ENCODE measurements at regions of chr6 and their contacts with region 1.

Region 1: GRCh38 chr6:33620856-33621710 is at the start of gene ITPR3:
- DNase-seq: peak; percentile 93
- H3K4me3 ChIP-seq: peak within 1 kb of the TSS; percentile 98
- H3K27ac ChIP-seq: peak within 1 kb of the TSS; percentile 75
- H3K4me1 ChIP-seq: peaks cover 56% of the 10 kb centered on the region
- CTCF ChIP-seq: no peak; the same call in 1 of the 2 replicates
- total RNA-seq, gene ITPR3: 47.8 and 56.6 TPM in 2 replicates

Region 2: GRCh38 chr6:33597551-33598322 is 23.3 kb before region 1 on chr6:
- CTCF ChIA-PET with region 1: no interaction called
- POLR2A ChIA-PET with region 1: interaction called, 5 read pairs
- intact Hi-C with region 1: loop called (anchors 1 kb)
- DNase-seq: no peak
- H3K4me3 ChIP-seq: no peak overlapping the region
- H3K27ac ChIP-seq: peak overlapping the region; percentile 52
- H3K4me1 ChIP-seq: peaks cover 56% of the 10 kb centered on the region
- CTCF ChIP-seq: no peak

Region 3: GRCh38 chr6:34067814-34068213 is 446.7 kb after region 1 on chr6:
- CTCF ChIA-PET with region 1: no interaction called
- POLR2A ChIA-PET with region 1: no interaction called
- intact Hi-C with region 1: no loop called
- DNase-seq: peak; percentile 29
- H3K4me3 ChIP-seq: no peak overlapping the region
- H3K27ac ChIP-seq: no peak overlapping the region
- H3K4me1 ChIP-seq: no peaks in the 10 kb centered on the region
- CTCF ChIP-seq: peak; percentile 42; the same call in 1 of the 2 replicates

Region 4: DNA sequence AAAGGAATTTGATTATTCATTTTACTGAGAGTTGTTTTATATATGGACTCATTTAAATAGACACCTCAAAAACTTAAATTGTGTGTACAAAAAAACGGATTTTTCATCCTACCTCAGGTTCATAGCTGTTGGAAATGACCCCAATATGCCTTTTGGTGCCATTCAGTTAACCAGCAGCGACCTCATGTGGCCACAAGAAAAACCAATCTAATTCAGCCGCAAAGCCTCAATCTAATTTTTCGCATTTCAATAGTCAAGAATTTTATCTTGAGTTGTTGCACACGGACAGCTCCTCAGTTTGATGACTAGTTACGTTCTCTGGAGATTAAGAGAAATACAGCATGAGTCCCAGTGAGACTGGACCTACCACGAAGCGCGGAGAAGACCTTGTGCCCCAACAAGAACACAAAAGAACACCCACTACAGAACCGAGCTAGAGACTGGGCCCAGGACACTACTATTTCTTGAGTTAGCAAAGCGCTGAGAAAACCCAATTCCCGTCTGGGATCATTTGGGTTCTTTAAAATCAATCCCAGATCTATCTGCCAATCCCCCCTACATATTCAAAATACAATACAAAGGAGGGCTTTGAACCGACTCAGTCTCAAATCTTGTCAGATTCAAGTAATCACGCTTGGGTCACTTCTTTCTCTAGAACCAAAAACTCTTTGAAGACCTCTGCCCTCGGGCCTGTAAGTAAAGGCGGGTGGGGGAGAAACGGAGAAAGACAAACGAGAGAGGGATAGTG is 1519.0 kb after region 1 on chr6:
- CTCF ChIA-PET with region 1: no interaction called
- POLR2A ChIA-PET with region 1: no interaction called
- intact Hi-C with region 1: no loop called
- DNase-seq: peak; percentile 79
- H3K4me3 ChIP-seq: no peak overlapping the region
- H3K27ac ChIP-seq: no peak overlapping the region
- H3K4me1 ChIP-seq: peaks cover 12% of the 10 kb centered on the region
- CTCF ChIP-seq: peak; percentile 97

Measured in OCI-LY7 (cell line).